ENCODE measurements at regions of chr11 and their contacts with region 1.

Region 1: GRCh38 chr11:104705490-104706190 is 192.6 kb downstream of the CASP12 start:
- DNase-seq: peak; percentile 77
- H3K4me3 Mint-ChIP-seq: peak overlapping the region; percentile 74
- H3K27ac Mint-ChIP-seq: peak overlapping the region; percentile 90
- H3K4me1 Mint-ChIP-seq: peaks cover 50% of the 10 kb centered on the region
- H3K27me3 Mint-ChIP-seq: no peaks in the 10 kb centered on the region

Region 2: GRCh38 chr11:104609311-104610085 is 96.1 kb before region 1 on chr11:
- intact Hi-C with region 1: loop called (anchors 2 kb)
- DNase-seq: peak; percentile 12
- H3K4me3 Mint-ChIP-seq: no peak overlapping the region
- H3K27ac Mint-ChIP-seq: no peak overlapping the region
- H3K4me1 Mint-ChIP-seq: peaks cover 18% of the 10 kb centered on the region
- H3K27me3 Mint-ChIP-seq: peaks cover 4% of the 10 kb centered on the region

Region 3: DNA sequence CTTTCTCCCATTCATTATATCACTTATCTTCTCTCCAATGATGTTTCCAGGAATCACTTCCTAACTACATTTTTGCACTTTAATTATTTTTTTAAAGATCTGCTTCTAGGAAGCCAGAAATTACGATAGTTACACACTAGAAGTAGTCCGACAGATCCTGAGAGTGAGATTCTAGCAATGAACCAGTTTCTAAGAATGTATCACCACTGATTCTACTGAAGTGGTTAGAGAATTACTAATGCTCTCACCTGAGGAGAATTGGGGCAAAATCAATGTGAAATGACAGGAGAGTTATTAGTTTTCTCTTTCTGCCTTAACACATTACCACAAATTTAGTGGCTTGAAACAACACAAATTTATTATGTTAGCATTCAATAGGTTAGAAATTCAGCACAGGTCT is 48.6 kb before region 1 on chr11:
- intact Hi-C with region 1: loop called (anchors 1 kb)
- DNase-seq: no peak
- H3K4me3 Mint-ChIP-seq: no peak overlapping the region
- H3K27ac Mint-ChIP-seq: no peak overlapping the region
- H3K4me1 Mint-ChIP-seq: peaks cover 42% of the 10 kb centered on the region
- H3K27me3 Mint-ChIP-seq: no peaks in the 10 kb centered on the region

Region 4: GRCh38 chr11:104731890-104732289 is 26.2 kb after region 1 on chr11:
- intact Hi-C with region 1: loop called (anchors 2 kb)
- DNase-seq: no peak
- H3K4me3 Mint-ChIP-seq: no peak overlapping the region
- H3K27ac Mint-ChIP-seq: no peak overlapping the region
- H3K4me1 Mint-ChIP-seq: peaks cover 19% of the 10 kb centered on the region
- H3K27me3 Mint-ChIP-seq: no peaks in the 10 kb centered on the region

Region 5: DNA sequence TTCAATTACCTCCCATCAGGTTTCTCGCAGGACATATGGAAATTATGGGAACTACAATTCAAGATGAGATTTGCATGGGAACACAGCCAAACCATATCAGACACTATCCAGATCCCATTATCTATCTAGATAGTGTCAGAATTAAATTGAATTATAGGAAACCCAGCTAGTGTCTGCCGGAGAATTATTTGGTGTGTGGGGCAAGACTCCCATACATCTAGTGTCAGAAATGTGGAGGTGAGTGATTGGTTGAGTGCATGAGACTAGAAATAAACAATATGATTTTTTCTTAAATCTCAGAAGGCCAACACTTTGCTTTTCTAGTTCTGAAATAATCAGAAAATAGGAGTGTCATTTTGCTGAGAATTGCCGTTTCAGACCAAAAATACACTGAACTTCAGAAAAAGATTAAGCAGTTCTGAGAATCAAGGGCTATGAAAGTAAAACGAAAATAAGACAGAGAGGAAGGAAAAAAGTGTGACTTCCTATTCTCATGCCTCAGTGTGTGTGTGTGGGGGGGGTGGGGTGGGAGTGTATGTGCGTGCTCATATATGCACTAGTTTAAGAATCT is 171.3 kb after region 1 on chr11:
- intact Hi-C with region 1: loop called (anchors 1 kb)
- DNase-seq: no peak
- H3K4me3 Mint-ChIP-seq: no peak overlapping the region
- H3K27ac Mint-ChIP-seq: no peak overlapping the region
- H3K4me1 Mint-ChIP-seq: peaks cover 25% of the 10 kb centered on the region
- H3K27me3 Mint-ChIP-seq: no peaks in the 10 kb centered on the region

Region 6: DNA sequence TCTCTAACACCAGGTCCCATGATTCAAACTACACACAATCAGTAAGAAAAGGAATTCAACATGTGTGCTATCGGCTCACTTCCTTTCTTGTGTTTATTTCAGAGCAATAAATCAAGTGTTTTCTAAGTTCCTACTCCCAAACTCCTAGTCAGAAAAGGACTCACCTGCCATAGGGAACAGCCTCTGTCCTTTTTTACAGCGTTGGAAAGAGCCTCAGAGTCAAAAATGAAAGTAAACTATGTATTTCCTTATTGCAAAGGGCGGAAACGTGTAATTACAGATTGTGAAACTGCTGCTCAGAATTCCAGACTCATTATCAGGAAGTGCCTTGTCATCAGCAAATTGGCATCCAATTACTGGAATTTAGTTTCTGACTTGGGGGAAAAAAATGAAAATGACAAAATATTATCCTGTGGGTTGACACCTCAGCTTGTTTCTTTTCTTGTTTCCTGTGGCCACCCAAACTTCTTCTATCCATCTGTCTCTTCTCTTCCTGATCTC is 262.8 kb after region 1 on chr11 and contains the start of gene CASP4:
- intact Hi-C with region 1: loop called (anchors 1 kb)
- DNase-seq: no peak
- H3K4me3 Mint-ChIP-seq: peak within 1 kb of the TSS; percentile 86
- H3K27ac Mint-ChIP-seq: peak within 1 kb of the TSS; percentile 75
- H3K4me1 Mint-ChIP-seq: peaks cover 34% of the 10 kb centered on the region
- H3K27me3 Mint-ChIP-seq: no peaks in the 10 kb centered on the region
- total RNA-seq, gene CASP4: 31.1 and 32.0 TPM in 2 replicates

Region 7: DNA sequence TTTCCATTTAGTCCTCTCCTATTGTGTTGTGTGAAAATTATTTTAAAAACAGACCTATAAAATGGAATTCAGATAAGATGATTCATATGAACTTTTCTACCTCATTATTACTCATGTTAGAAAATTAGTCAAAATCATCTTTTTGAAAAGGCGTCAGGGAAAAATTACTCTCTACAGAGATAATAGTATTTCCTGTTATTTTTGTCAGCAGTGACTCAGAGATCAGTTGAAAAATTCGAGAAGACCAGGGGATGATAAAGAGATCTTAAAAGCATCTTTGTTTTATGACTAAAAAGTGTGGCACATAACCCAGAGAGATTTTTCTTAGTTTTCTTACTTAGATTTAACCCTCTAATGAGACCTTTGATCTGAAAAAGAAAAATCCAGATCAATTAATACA is 591.8 kb after region 1 on chr11:
- intact Hi-C with region 1: loop called (anchors 5 kb)
- DNase-seq: no peak
- H3K4me3 Mint-ChIP-seq: no peak overlapping the region
- H3K27ac Mint-ChIP-seq: peak overlapping the region; percentile 26
- H3K4me1 Mint-ChIP-seq: peaks cover 15% of the 10 kb centered on the region
- H3K27me3 Mint-ChIP-seq: no peaks in the 10 kb centered on the region

Measured in activated T-helper 2 cell treated with anti-CD3 and anti-CD28 coated beads, Interferon-gamma antibody, Interleukin-2, Interleukin-4, amounts not matched to agents 10 μg/mL and 5 μg/mL and 100 μg/mL, durations not matched to agents 14 hours and 24 hours and 36 hours (primary cell).